Mammary epithelial cell (primary cell): ENCODE measurements at regions of chr22 and their contacts with region 1.

Region 1: DNA sequence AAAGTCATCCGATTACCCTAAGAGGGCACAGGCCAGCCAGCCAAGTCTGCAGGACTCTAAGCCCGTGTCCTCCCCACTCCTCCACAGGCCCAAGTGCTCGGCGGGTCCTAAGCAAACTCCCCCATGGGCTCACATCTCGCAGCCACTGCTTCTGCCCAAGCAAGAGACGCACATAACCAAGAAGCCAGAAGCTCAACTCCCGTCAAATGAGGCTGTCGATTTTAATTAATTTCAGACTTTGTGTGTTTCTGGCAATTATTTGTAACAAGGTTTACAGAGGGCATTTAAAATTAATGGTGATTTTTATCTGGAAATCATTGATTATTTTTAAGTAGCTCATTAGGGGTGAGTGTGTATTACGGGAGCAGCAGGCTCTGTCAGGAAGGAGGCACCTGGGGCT is 27.4 kb downstream of the PHF21B start:
- DNase-seq: no peak
- H3K4me3 ChIP-seq: no peak overlapping the region
- H3K27ac ChIP-seq: no peak overlapping the region
- H3K4me1 ChIP-seq: no peaks in the 10 kb centered on the region
- H3K27me3 ChIP-seq: peaks cover 3% of the 10 kb centered on the region
- CTCF ChIP-seq: no peak

Region 2: GRCh38 chr22:44880605-44881290 is 101.7 kb before region 1 on chr22:
- CTCF ChIA-PET with region 1: no interaction called
- dilution Hi-C with region 1: loop called (anchors 5 kb)
- in situ Hi-C with region 1: no loop called
- intact Hi-C with region 1: no loop called
- DNase-seq: no peak
- H3K4me3 ChIP-seq: no peak overlapping the region
- H3K27ac ChIP-seq: no peak overlapping the region
- H3K4me1 ChIP-seq: no peaks in the 10 kb centered on the region
- H3K27me3 ChIP-seq: no peaks in the 10 kb centered on the region
- CTCF ChIP-seq: no peak

Region 3: DNA sequence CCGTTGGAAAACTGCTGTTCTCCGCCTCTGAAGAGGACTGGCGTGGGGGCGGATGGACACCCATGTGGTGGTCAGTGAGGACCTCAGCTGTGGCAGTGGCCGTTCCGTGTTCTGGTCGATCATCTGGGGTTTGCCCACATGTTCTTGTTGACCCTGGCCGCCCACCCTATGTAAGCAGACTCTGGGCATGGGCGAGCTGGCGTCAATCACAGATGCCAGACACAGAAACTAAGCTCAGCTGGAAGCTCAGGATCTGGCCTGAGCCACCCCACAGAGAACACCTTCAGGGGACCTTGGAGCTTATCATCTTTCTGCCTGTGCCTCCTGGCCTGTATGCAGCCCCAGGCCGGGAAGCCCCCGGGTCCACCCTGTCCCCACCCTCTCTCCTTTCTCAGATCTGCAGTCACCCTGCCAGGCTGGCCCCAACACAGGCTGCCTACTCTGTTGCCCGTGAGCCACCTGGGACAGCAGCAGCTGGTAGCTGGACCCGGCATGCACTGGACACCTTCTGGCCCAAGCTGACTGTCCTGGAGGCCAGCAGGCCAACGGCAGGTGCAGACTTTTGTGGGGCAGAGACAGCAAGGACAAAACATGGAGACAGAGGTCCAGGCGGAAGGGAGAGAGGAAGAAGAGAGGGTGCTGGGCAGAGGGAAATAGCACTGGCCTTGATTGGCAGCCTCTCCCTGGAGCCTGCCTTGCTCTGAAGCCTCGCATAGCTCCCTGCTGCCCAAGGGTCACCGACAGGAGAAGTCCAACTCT is 64.1 kb before region 1 on chr22:
- CTCF ChIA-PET with region 1: no interaction called
- dilution Hi-C with region 1: loop called (anchors 5 kb)
- in situ Hi-C with region 1: no loop called
- intact Hi-C with region 1: no loop called
- DNase-seq: no peak
- H3K4me3 ChIP-seq: no peak overlapping the region
- H3K27ac ChIP-seq: no peak overlapping the region
- H3K4me1 ChIP-seq: peaks cover 5% of the 10 kb centered on the region
- H3K27me3 ChIP-seq: peaks cover 4% of the 10 kb centered on the region
- CTCF ChIP-seq: no peak

Region 4: GRCh38 chr22:45045208-45045607 is 62.8 kb after region 1 on chr22:
- CTCF ChIA-PET with region 1: no interaction called
- dilution Hi-C with region 1: loop called (anchors 5 kb)
- in situ Hi-C with region 1: no loop called
- intact Hi-C with region 1: no loop called
- DNase-seq: no peak
- H3K4me3 ChIP-seq: no peak overlapping the region
- H3K27ac ChIP-seq: no peak overlapping the region
- H3K4me1 ChIP-seq: no peaks in the 10 kb centered on the region
- H3K27me3 ChIP-seq: peaks cover 4% of the 10 kb centered on the region
- CTCF ChIP-seq: no peak